MCF 10A (cell line): ENCODE measurements at regions of chr16 and their contacts with region 1.

Region 1: DNA sequence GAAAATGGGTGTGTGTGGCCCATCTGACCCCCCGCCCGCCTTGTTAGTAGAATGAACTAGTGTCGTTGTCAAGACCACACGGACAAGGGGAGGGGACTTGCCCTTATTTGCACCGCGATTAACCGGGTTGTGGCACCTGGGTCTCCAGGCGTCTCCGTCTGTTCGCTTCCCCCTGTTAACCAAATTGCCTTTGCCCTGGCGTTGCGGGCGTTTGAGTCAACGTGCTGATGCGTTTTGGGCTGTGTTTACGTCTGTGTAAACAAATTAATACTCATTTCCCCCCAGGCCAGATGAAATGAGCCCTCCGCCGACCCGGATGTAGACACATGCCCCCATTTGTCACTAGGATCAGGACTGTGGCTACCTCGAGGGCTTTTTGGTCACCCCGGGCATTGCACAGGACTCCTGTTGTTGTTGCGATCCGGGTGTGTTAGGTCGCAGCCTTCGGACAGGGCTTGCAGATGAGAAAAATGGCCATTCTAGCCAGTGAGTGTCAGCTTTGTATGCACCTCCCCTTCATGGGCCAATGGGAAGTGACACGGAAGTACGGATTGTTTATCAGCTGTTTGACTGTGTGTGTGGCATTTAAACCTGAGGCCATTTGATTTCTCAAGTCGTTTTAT is 906 bp downstream of the RBL2 start:
- DNase-seq: peak; percentile 90
- H3K4me3 Mint-ChIP-seq: peak overlapping the region; percentile 97
- H3K27ac Mint-ChIP-seq: peak overlapping the region; percentile 95
- H3K4me1 Mint-ChIP-seq: no peaks in the 10 kb centered on the region
- H3K27me3 Mint-ChIP-seq: no peaks in the 10 kb centered on the region
- CTCF ChIP-seq: no peak

Region 2: GRCh38 chr16:53372992-53373871 is 61.9 kb before region 1 on chr16:
- CTCF ChIA-PET with region 1: no interaction called
- POLR2A ChIA-PET with region 1: interaction called, 85 read pairs
- intact Hi-C with region 1: no loop called
- DNase-seq: peak; percentile 62
- H3K4me3 Mint-ChIP-seq: peak overlapping the region; percentile 76
- H3K27ac Mint-ChIP-seq: no peak overlapping the region
- H3K4me1 Mint-ChIP-seq: peaks cover 16% of the 10 kb centered on the region
- H3K27me3 Mint-ChIP-seq: no peaks in the 10 kb centered on the region
- CTCF ChIP-seq: no peak

Region 3: DNA sequence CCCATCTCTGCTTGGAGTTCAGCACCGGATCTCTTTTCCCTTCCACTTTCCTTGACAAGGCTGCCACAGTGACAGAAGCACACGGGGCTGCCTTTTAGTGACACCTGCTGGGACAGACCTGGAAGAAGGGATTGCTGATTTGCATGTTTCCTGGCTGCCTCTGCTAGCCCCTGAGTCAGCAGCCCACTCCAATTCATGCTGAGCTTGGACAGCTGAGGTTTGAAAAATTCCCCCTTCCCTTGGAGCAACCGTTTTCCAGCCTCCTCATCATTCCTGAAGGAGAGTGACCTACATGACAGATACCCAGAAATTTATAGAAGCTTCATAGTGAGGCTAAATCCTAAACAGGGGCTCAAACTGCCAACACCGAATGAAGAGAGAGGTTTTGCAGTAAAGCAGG is 19.7 kb before region 1 on chr16:
- CTCF ChIA-PET with region 1: no interaction called
- POLR2A ChIA-PET with region 1: interaction called, 35 read pairs
- intact Hi-C with region 1: no loop called
- DNase-seq: peak; percentile 29
- H3K4me3 Mint-ChIP-seq: no peak overlapping the region
- H3K27ac Mint-ChIP-seq: no peak overlapping the region
- H3K4me1 Mint-ChIP-seq: peaks cover 14% of the 10 kb centered on the region
- H3K27me3 Mint-ChIP-seq: no peaks in the 10 kb centered on the region
- CTCF ChIP-seq: no peak

Region 4: DNA sequence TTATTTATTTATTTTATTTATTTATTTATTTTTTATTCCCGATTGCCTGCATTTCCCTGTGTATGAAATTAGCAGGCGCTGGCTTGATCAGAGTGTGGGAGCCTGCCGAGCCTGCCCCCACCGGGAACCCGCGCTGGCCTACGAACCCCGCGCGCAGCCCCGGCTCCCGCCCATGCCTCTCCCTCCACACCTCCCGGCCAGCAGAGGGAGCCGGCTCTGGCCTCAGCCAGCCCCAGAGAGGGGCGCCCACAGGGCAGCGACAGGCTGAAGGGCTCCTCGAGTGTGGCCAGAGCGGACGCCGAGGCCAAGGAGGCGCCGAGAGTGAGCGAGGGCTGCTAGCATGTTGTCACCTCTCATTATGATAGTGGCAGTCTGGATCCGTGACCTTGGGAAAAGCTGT is 13.9 kb before region 1 on chr16:
- CTCF ChIA-PET with region 1: interaction called, 4 read pairs
- POLR2A ChIA-PET with region 1: interaction called, 35 read pairs
- intact Hi-C with region 1: no loop called
- DNase-seq: no peak
- H3K4me3 Mint-ChIP-seq: no peak overlapping the region
- H3K27ac Mint-ChIP-seq: no peak overlapping the region
- H3K4me1 Mint-ChIP-seq: peaks cover 9% of the 10 kb centered on the region
- H3K27me3 Mint-ChIP-seq: no peaks in the 10 kb centered on the region
- CTCF ChIP-seq: no peak

Region 5: DNA sequence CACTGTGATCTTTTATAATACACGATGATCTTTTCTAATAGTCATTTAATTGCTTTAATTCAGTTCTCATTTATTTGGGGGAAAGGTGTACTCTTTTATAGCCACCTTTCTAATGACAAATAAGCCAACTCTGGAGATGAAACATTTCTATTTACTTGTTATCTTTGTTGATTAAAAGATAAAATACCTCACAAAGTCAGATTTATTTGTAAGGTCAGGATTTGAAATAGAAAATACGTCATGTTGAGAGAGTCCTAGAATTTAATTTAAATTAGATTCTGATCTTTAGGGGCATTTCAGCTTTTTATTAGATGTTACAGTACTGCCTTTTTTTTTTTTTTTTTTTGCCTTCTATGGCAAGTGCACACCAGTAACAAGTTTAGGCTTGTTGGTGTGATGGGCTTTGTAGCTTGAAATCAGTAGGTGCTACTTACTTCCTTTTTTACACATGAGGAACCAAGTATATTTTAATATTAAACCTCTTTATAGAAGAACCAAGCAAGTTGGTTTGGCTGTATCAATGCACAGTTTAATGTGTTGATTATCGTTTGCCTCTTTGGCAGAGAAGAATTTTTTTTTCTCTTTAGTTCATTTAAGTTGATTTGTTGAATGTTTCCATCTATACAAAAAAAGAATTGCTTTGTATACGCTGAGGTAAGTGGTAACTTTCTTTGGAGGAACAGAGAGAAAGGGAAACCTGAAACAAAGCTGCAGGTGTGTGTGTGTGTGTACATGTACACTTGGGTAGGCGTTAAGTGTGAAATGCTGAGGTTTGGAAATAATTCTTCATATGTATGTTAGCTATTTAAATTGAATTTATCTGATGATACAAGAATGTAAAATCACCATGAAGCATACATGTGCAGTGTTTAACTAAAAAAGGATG is 14.7 kb after region 1 on chr16:
- CTCF ChIA-PET with region 1: interaction called, 3 read pairs
- POLR2A ChIA-PET with region 1: interaction called, 79 read pairs
- intact Hi-C with region 1: no loop called
- DNase-seq: no peak
- H3K4me3 Mint-ChIP-seq: no peak overlapping the region
- H3K27ac Mint-ChIP-seq: peak overlapping the region; percentile 8
- H3K4me1 Mint-ChIP-seq: no peaks in the 10 kb centered on the region
- H3K27me3 Mint-ChIP-seq: no peaks in the 10 kb centered on the region
- CTCF ChIP-seq: no peak

Region 6: DNA sequence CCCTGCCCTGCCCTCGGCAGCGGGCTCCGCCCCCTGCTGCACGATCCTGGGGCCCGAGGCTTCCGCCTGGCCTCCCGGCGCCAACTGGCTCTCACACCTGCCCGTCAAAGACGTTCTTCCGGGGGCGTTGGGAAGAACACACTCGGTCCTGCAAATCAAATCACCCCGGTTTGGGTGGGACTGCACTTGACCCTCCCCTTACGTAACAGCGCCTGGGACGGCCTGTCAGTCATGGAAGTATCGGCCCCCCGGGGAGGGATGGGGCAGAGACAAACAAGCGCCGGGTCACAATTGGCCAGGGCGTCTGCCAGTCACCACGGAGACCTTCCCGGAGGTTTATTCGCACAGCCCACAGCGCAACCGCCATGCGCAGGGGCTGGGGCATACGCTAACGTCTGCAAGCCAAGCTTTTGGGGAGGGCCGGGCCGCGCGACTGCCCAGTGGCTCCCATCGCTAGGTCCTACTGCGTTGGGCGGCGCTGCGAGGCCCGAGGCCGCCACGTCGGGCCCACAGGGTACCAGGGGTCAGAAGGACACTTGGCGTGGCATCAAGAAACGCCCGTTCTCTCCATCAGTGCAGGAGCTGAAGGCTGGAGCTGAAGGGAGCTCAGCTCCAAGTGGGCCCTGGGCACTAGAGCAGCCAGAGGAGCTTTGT is 68.2 kb after region 1 on chr16:
- CTCF ChIA-PET with region 1: no interaction called
- POLR2A ChIA-PET with region 1: interaction called, 27 read pairs
- intact Hi-C with region 1: loop called (anchors 5 kb)
- DNase-seq: peak; percentile 100
- H3K4me3 Mint-ChIP-seq: peak overlapping the region; percentile 70
- H3K27ac Mint-ChIP-seq: peak overlapping the region; percentile 88
- H3K4me1 Mint-ChIP-seq: peaks cover 23% of the 10 kb centered on the region
- H3K27me3 Mint-ChIP-seq: no peaks in the 10 kb centered on the region
- CTCF ChIP-seq: no peak

Region 7: GRCh38 chr16:53541326-53541725 is 106.1 kb after region 1 on chr16:
- CTCF ChIA-PET with region 1: no interaction called
- POLR2A ChIA-PET with region 1: no interaction called
- intact Hi-C with region 1: no loop called
- DNase-seq: no peak
- H3K4me3 Mint-ChIP-seq: no peak overlapping the region
- H3K27ac Mint-ChIP-seq: no peak overlapping the region
- H3K4me1 Mint-ChIP-seq: no peaks in the 10 kb centered on the region
- H3K27me3 Mint-ChIP-seq: no peaks in the 10 kb centered on the region
- CTCF ChIP-seq: no peak